ENCODE measurements at regions of chr17 and their contacts with region 1.

Region 1: DNA sequence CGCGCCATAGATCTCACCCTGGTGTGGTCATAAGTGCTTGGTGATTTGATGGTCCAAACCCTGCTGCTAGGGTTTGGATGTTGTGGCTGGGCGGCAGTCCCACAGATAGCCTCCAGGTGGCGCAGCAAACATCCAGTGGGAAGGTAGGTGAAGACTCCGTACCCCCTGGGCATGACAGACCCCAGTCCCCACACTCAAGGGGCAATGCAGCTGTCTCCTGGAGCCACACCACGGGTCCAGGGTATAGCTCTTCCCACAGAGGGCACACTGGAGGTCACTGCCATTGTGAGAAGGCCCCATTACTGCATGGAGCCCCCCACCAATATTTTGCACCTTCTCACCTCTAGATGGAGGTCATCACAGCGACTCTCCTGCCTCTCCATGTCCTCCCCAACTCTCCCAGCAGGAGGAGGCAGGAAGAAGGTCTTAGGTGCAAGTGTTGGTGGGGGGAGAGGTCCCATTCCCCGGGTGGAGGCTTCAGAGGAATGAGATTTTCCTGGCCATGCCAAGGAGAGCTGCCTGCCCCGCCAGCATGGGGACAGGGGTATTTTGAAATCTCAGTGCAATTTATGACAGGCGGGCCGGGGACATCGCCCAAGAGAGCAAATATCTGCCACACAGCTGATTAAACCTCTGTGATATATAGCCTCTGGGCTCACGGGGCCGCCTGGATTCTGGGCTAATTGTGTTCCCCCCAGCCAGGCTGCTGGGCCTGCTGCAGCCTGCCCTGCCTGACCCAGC is 17.1 kb upstream of the C17orf113 start:
- DNase-seq: peak; percentile 82
- H3K4me3 Mint-ChIP-seq: no peak overlapping the region
- H3K27ac Mint-ChIP-seq: no peak overlapping the region
- H3K4me1 Mint-ChIP-seq: peaks cover 5% of the 10 kb centered on the region
- H3K27me3 Mint-ChIP-seq: peaks cover 13% of the 10 kb centered on the region

Region 2: DNA sequence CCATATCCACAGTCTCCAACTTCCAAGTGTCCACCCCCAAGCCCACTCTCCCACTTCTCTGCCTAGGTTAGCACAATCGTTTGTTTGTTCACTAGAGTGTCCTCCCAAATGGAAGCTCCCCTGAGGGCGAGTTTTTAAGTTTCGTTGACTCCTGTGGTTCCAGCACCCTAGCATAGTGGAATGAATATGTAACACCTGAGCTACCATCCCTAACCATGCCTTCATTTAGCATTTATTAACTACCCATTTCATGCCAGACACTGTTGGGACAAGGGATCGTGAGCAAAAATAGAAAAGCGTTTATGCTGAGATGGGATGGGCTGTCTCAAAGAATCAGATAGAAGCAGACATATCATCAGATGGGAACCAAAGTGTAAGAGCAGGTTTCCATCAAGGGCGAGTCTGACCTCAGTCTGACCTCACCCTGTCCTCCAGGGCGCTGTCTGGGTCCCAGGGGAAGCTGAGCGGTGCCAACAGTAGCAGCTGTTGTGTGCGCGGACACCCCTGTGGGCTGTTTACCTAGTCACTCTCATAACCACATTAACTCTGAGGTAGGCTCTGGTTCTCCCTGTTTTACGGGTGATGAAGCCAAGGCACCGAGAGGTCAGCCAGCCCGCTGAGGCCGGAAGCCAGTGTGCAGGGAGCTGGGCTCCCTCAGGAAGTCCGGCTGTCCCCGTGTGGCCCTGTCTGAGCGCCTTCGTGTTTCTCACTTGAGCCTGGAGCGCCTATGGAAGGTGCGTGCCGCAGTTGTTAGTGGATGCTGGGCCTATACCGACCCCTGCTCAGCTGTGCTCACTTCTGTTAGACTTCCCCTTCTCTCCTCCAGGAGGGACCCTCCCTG is 94.7 kb before region 1 on chr17:
- CTCF ChIA-PET with region 1: no interaction called
- POLR2A ChIA-PET with region 1: no interaction called
- intact Hi-C with region 1: no loop called
- DNase-seq: no peak
- H3K4me3 Mint-ChIP-seq: no peak overlapping the region
- H3K27ac Mint-ChIP-seq: no peak overlapping the region
- H3K4me1 Mint-ChIP-seq: peaks cover 25% of the 10 kb centered on the region
- H3K27me3 Mint-ChIP-seq: no peaks in the 10 kb centered on the region

Region 3: DNA sequence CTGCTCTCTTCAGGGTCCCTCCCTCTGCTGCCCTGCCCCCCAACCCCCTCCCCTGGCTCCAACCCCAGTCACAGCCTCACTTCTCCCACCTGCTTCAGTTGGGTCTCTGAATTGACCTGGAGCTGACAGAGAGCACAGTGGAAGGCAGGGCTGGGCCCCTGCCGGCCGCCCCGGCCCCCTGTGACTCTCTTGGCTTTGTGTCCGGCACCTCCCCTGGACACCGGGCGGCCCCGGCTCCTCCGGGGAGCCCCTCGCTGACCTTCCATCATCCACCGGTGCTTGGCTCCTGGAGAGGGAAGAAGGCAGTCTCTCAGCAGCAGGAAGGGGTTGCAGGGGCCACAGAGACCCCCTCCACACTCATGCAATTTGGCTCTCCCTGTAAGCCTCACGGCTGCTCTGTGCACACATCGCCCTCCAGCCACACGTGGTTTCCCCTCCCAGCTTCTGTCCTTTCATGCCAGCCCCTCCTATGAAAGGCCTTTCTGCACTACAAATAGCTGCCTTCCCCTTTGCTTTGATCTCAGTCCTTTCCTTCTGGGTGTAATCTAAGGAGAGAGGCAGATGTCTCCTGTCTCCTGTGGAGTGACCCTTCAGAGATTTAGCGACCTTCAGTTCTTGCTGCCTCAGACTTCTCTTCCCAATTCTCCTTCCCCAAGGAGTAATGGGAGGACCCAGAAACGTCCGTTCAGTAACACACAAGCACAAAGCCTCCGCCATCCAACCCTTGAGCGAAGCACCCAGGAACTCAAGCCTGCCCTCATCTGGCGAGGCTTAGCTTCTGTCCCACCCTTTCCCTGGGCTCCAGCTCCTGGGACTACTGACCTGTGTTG is 39.3 kb before region 1 on chr17:
- CTCF ChIA-PET with region 1: interaction called, 7 read pairs
- POLR2A ChIA-PET with region 1: no interaction called
- intact Hi-C with region 1: loop called (anchors 5 kb)
- DNase-seq: no peak
- H3K4me3 Mint-ChIP-seq: no peak overlapping the region
- H3K27ac Mint-ChIP-seq: no peak overlapping the region
- H3K4me1 Mint-ChIP-seq: peaks cover 5% of the 10 kb centered on the region
- H3K27me3 Mint-ChIP-seq: no peaks in the 10 kb centered on the region

Region 4: GRCh38 chr17:42050393-42051012 is 17.0 kb before region 1 on chr17 and contains the start of gene C17orf113:
- CTCF ChIA-PET with region 1: interaction called, 10 read pairs
- POLR2A ChIA-PET with region 1: no interaction called
- intact Hi-C with region 1: no loop called
- DNase-seq: peak; percentile 54
- H3K4me3 Mint-ChIP-seq: peak within 1 kb of the TSS; percentile 66
- H3K27ac Mint-ChIP-seq: no peak within 1 kb of the TSS
- H3K4me1 Mint-ChIP-seq: peaks cover 6% of the 10 kb centered on the region
- H3K27me3 Mint-ChIP-seq: peaks cover 39% of the 10 kb centered on the region
- total RNA-seq, gene C17orf113: 0.15 to 0.26 TPM

Region 5: GRCh38 chr17:42101513-42102319 is 34.2 kb after region 1 on chr17:
- CTCF ChIA-PET with region 1: interaction called, 70 read pairs
- POLR2A ChIA-PET with region 1: no interaction called
- intact Hi-C with region 1: loop called (anchors 1 kb)
- DNase-seq: peak; percentile 84
- H3K4me3 Mint-ChIP-seq: no peak overlapping the region
- H3K27ac Mint-ChIP-seq: no peak overlapping the region
- H3K4me1 Mint-ChIP-seq: peaks cover 8% of the 10 kb centered on the region
- H3K27me3 Mint-ChIP-seq: peaks cover 13% of the 10 kb centered on the region

Region 6: DNA sequence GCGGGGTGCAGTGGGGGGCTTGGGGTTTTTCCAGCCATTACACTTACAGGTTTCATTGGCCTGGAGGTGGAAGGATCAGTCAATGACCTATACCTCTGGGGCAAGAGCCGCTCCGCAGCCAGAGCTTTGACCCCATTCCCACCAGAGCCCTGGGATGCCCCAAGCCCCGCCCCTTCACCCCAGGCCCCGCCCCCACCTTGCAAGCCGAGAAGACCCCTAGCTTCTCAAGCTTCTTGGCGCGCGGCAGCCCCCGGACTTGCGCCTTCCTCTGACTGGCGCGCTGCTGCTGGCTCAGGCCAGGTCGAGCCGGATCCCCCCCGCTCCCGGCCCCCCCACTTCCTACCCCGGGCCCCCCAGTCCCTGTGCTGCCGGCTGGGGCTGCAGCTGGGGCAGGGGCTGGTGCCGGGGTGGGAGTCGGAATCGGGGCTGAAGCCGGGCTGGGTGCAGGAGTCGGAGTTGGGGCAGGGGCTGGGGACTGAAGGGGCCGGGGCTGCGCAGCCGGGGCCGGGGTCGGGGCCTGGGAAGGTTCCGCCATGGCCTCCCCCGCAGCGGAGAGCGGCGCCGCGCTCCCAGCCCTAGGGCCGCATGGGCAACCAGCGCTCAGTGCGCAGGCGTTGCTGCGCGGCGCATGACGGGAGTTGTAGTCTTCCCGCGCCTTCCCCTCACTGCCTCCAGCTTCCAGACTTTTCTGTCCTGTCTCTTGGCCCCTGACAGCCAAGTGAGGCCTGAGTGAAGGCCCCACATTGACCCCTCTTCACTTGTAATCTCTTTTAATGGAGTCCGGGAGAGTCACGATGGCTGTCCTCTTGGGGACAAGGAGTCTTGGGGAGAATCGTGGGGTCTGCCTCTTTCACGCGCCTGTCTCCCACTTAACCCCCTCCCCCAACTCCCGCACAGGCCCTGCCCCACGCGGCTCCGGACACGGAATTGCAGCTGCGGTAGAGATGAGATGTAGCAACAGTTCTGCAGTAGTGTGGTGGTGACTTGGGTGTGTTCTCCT is 53.5 kb after region 1 on chr17 and contains the start of gene KAT2A:
- CTCF ChIA-PET with region 1: interaction called, 36 read pairs
- POLR2A ChIA-PET with region 1: no interaction called
- intact Hi-C with region 1: loop called (anchors 1 kb)
- DNase-seq: peak; percentile 85
- H3K4me3 Mint-ChIP-seq: peak within 1 kb of the TSS; percentile 56
- H3K27ac Mint-ChIP-seq: peak within 1 kb of the TSS; percentile 51
- H3K4me1 Mint-ChIP-seq: peaks cover 31% of the 10 kb centered on the region
- H3K27me3 Mint-ChIP-seq: no peaks in the 10 kb centered on the region
- total RNA-seq, gene KAT2A: 38.6 to 41.0 TPM

Region 7: GRCh38 chr17:42312285-42313130 is 245.0 kb after region 1 on chr17:
- CTCF ChIA-PET with region 1: no interaction called
- POLR2A ChIA-PET with region 1: no interaction called
- intact Hi-C with region 1: no loop called
- DNase-seq: peak; percentile 92
- H3K4me3 Mint-ChIP-seq: peak overlapping the region; percentile 42
- H3K27ac Mint-ChIP-seq: peak overlapping the region; percentile 74
- H3K4me1 Mint-ChIP-seq: peaks cover 76% of the 10 kb centered on the region
- H3K27me3 Mint-ChIP-seq: no peaks in the 10 kb centered on the region

Measured in activated CD4-positive, alpha-beta memory T cell treated with anti-CD3 and anti-CD28 coated beads for 36 hours (primary cell).